GM10248 (cell line): ENCODE measurements at regions of chr17 and their contacts with region 1.

Region 1: DNA sequence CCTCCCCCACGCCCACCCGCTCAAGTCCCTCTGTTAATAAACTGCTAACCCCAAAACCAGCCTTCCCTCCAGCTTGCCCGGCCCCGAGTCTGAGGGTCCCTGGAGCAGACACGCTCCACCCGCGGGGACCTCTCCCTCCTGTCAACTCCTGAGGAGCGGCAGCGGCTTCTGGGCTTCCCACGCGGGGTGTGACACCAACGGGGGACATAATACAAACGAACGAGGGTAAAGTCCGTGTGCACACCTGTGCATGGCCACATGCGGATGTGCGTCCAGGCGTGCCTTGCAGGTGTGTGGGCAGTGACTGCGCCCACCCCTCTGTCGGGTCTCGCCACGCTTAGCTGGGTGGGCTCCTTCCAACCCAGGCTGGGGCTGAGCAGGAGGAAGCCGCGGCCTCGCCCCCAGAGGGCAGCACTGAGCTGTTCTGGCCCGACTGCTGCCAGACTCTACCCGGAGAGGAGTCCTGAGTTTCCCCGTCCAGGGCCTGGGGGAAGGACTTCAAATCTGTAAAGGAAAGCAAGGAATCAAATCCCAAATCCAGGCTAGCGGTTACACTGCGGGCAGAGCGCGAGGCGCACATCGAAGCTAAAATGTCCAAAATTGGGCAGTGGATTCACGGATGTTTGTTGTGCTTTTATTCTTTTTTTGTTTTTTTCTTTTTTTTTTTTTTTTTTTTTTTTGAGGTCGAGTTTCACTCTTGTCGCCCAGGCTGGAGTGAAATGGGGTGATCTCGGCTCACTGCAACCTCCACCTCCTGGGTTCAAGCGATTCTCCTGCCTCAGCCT is 24.2 kb upstream of the KRT17 start:
- DNase-seq: peak; percentile 89
- CTCF ChIP-seq: peak; percentile 87

Region 2: DNA sequence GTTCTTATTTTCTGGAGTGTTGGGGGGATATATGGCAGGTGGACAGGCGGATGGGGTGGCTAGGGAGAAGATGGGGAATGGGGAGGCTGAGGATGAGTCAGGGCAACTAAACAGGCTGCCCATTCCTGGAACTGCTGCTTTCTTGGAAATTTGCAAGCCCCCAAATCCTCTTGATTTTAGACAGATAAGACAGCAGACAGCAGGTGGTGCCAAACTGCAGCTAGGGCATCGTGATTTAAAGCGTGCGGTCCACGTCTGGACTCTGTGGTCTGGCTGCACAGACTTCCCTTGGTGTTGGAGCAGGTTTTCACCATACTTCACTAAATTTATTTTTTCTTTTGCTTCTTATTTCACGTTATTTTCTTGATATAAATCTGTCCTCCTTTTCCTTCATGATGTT is 934.1 kb before region 1 on chr17:
- CTCF ChIA-PET with region 1: no interaction called
- POLR2A ChIA-PET with region 1: no interaction called
- DNase-seq: no peak
- CTCF ChIP-seq: no peak

Region 3: DNA sequence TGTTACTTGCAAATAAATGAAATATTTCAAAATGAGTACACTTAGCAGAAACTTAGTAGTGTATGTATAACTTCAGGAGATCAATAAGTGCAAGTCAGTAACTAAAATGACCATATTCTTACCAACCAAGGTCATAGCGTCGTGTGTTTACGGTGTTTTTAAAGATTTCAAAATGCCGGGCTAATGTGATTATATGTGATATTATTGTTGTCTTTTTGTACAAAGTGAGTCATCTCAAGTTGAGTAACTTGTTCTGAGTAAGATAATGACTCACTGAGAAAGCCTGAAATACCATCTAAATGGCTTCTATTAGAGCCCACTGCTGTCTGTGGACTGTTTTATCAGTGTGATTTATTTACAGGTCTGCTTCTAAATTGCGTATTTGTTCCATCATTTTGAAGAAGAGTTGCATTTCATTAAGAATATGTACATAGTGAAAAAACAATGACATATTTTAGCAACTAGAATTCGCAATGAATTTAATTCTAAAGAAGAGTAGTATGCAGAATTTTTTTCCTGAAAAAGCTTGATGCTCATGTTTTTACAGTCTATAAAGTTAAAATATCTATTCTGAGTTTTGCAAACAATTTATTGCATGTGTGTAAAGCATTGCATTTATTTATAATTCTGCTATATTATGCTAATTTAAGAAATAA is 794.3 kb before region 1 on chr17:
- CTCF ChIA-PET with region 1: interaction called, 31 read pairs
- POLR2A ChIA-PET with region 1: no interaction called
- DNase-seq: no peak
- CTCF ChIP-seq: no peak

Region 4: DNA sequence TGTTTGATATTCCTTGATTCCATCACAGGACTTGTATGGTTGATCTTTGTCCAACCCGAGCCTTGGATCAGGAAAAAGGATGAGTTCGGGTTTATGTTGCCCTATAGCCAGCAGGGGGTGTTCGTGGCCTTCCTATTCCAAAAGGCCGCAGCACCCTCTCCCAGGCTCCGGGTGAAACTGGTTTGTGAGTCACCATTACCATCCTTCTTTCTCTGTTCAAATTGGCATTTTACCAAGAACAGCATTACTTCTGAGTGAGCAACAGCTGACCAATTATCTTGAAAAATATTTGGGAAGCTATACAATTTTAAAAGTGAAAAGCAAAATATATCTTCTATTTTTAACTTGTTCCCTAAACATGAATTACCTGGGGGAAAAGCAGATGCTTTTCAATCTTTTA is 739.3 kb before region 1 on chr17:
- CTCF ChIA-PET with region 1: interaction called, 17 read pairs
- POLR2A ChIA-PET with region 1: no interaction called
- DNase-seq: peak; percentile 67
- CTCF ChIP-seq: peak; percentile 62

Region 5: DNA sequence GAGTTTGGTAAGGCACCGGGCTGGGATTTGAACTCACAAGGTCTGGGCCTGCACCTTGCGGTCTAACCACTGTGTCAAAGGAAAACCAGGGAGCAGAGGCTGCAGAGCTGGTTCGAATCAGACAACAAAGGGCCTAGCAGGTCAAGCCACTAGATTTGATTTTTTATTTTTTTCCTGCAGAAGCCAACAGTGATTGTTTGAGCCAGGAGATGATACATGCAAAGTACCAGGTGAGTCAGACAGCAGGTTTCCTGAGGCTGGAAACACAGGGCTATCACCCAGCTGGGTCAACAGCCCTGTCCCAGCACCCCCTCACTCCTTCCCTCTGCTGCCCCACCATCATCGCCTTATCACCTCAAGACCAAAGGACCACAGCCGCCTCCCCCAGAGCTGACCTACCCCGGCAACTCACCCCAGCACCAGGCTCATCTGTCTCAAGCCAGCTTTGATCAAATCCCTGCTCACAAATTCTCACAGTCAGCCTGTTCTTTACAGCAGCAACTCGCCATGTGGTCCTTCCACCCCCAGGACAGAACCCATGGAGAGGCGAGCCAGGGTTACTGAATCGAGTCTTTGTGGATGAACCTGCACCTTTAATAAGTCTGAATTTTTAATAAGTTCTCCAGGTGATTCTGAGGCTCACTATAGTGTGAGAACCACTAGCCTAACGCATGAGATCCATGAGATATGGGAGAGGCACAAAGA is 107.5 kb before region 1 on chr17:
- CTCF ChIA-PET with region 1: interaction called, 11 read pairs
- POLR2A ChIA-PET with region 1: no interaction called
- DNase-seq: no peak
- CTCF ChIP-seq: no peak

Region 6: DNA sequence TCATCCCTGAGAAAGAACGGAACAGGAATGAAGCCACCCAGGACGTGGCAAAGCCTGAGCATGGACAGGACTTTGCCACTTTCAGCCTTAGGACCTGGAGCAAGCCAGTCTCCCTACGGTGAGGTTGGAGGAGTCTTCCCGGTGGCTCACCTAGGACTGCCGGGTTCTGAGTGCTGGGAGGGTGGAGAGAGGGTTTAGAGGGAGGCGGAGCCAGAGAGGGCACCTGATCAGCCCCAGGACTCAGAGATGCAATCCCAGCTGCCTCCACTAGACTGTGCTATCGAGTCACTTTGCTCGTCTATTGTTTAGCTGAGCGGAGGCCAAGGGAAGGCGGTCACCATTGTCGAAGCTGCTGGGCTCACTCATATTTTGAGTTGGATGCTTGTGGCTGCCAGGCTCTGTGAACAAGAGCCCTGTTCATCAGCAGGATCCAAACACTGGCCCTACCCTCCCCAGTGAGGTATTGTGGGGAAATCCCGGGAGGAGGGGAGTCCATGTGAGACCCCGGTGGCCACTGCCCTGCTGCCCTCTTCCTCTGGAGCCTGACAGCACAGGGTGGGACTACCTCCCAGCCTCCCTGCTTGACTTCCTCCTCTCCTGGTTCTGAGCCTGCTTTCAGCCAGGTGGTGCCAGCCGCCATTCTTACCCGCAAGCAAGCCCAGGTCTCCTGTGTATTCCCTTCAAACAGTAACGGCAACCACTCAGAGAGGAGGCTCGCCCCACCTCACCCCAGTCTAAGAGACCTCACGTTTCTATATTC is 68.9 kb before region 1 on chr17:
- CTCF ChIA-PET with region 1: interaction called, 14 read pairs
- POLR2A ChIA-PET with region 1: no interaction called
- DNase-seq: peak; percentile 87
- CTCF ChIP-seq: peak; percentile 48

Region 7: DNA sequence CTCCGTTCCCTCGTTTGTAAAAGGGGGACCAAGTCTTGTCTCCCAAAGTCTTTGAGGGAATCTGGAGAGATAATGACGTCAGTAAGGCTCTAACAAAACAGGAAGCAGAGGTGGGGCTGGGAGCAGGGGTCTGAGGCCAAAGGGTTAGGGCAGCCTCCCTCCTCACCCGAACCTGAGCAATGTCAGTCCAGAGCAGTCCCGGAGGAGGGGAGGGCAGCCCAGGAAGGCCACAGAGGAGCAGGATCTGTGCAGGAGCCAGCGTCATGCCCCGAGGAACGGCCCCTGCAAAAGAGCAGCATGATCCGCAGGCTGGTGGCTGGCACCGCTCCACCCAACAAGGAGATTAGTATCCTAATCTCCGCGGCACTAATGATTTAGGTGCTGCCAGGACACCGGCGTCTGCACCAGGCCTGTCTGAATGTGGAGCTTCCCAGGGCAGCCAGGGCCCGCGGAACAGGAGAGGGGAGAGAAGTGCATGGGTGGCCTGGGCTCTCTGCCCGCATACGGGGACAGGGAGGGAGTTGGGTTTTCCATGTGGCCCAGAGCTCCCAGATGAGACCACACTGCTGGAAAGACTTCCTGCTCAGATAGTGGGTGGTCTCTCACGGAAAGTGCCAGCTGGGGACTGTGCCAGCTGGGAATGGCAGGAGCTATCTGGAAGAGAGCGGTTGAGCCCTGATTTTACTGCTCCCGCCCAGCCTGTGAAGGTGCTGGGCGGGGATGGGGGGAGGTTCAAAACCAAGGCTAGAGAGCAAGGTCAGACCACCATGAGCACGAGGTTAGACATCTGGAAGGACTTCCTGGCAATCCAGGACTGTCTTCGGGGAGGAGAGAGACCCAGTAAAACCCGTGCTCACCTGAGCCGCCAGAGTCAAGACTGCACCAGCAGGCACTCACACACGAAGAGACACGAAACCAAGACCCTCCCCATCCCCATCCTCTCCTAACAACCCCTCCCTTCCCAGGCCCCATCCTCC is 13.2 kb before region 1 on chr17:
- CTCF ChIA-PET with region 1: interaction called, 20 read pairs
- POLR2A ChIA-PET with region 1: no interaction called
- DNase-seq: no peak
- CTCF ChIP-seq: no peak

Region 8: DNA sequence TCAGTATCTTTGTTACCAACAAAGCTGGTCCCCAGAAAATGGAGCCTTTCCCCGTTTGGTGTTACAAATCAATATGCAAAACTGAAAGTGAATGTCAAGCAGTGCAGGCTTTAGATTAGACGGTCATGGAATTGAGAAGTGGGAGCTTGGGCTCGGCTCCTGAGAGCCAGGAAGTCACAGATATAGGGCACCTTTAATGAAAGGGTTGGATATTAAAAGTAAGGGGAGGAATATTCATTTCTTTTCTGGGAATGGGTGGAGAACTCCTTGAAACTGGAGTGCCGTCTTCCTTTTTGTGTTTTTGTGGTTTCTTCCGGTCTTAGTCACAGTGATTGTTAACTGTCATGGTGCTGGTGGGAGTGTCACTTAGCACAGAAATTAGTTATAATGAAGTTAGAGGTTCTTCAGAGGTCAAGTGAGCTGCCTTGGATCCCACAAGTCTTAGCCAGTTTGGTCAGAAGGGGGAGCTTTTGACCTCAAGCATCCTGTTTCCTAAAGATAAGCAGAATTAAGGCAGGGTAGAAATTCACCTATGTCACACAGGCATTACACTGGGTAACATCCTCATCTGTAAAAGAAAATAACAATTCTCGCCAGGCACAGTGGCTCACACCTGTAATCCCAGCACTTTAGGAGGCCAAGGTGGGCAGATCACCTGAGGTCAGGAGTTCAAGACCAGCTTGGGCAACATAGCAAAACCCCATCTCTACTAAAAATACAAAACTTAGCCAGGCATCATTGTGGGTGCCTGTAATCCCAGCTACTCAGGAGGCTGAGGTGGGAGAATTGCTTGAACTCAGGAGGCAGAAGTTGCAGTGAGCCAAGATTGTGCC is 30.5 kb after region 1 on chr17:
- CTCF ChIA-PET with region 1: interaction called, 24 read pairs
- POLR2A ChIA-PET with region 1: no interaction called
- DNase-seq: no peak
- CTCF ChIP-seq: peak; percentile 61